Activated CD4-positive, alpha-beta T cell treated with anti-CD3 and anti-CD28 coated beads, Interleukin-2, amount 10 ng/mL, durations not matched to agents 7 days and 5 days (primary cell): ENCODE measurements at regions of chr5 and their contacts with region 1.

Region 1: GRCh38 chr5:151659001-151659754 is 27.5 kb downstream of the SPARC start:
- DNase-seq: peak; percentile 82
- H3K4me3 Mint-ChIP-seq: no peak overlapping the region
- H3K27ac Mint-ChIP-seq: no peak overlapping the region
- H3K4me1 Mint-ChIP-seq: peaks cover 12% of the 10 kb centered on the region
- H3K27me3 Mint-ChIP-seq: peaks cover 16% of the 10 kb centered on the region

Region 2: GRCh38 chr5:151671950-151672349 is 12.8 kb after region 1 on chr5:
- CTCF ChIA-PET with region 1: interaction called, 13 read pairs
- POLR2A ChIA-PET with region 1: no interaction called
- DNase-seq: no peak
- H3K4me3 Mint-ChIP-seq: no peak overlapping the region
- H3K27ac Mint-ChIP-seq: no peak overlapping the region
- H3K4me1 Mint-ChIP-seq: no peaks in the 10 kb centered on the region
- H3K27me3 Mint-ChIP-seq: peaks cover 3% of the 10 kb centered on the region